ENCODE measurements at regions of chr11 and their contacts with region 1.

Region 1: DNA sequence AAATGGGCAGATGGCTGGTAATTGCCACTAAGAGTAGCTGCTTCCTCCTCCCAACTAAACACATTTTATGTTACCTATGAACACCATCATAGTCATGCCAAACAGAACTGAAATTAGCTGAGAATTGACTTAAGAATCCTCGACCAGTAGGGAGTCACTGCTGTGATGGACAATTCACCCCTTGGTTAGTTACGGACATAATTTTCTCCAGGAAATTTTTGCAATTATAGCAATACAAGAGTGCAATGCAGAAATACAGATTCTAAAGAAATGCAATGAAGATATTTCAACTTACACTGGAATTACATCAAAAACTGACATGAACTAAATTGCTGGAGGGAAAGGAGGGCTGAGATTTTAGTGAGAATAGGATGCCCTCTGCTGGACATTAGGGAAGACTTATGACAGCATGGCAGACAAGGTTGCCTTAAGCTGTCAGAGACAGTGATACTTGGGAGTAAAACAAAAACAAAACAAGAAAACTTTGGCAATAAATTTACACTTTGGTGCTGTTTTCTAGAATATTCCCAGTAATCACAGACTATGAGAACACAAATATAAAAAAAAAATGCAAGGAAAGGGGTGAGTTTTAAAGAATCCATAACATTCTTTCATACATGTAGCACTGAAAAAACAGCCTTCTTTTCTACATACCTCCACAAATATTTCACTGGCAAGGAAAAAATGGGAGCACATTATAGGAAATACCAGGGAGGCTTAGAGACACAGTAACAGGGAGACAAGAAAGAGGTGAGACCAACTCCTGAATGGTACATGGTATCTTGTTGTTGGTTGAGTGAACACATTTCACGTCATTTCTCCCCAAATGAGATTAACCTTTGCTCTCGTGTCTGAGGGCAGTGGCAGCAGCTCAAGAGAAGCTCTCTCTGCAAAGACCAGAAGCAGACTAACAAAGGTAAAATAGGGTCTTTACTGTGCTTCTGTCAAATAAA is 11.2 kb upstream of the PPP2R1B start:
- DNase-seq: peak in 1 of 2 donors; percentile 44
- ATAC-seq: peak; percentile 66 to 90 (median 84)
- H3K4me3 ChIP-seq: no peak overlapping the region
- H3K27ac ChIP-seq: peak overlapping the region in 2 of 10 donors; percentile 5 to 8
- H3K4me1 ChIP-seq: peaks cover 0 to 25% (median 7%) of the 10 kb centered on the region in 9 donors
- H3K27me3 ChIP-seq: no peaks in the 10 kb centered on the region
- CTCF ChIP-seq: peak; percentile 62 to 91 (median 82)

Region 2: DNA sequence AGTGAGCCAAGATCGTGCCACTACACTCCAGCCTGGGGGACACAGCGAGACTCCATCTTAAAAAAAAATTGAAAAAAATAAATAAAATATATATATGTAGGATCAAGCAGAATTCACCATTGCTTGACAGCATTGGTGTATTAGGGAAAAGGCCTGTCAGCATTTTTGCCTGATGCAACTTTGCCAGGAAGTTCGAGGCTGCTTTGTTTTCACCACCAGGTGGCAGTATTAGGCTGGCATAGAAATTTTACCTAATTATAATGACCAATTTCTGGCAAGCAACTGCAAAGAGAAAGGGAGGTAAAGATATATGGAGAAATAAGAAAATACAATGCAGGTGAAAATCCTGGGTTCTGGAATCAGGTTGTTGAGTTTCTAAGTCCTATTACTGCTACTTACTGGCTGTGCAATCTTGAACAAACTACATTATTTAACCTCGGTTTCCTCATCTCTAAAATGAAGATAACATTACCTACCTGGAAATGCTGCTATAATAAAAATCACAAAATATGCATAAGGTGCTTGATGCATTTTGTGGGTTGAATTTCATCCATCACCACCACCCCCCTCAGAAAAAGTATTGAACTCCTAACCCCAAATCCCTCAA is 212.2 kb before region 1 on chr11:
- intact Hi-C with region 1: loop called in 2 of 10 experiments (anchors 1 to 10 kb)
- DNase-seq: peak; percentile 18 to 79
- ATAC-seq: peak in 7 of 8 donors; percentile 30 to 54 (median 39)
- H3K4me3 ChIP-seq: no peak overlapping the region
- H3K27ac ChIP-seq: no peak overlapping the region
- H3K4me1 ChIP-seq: peaks cover 0 to 13% (median 0%) of the 10 kb centered on the region in 9 donors
- H3K27me3 ChIP-seq: no peaks in the 10 kb centered on the region
- CTCF ChIP-seq: peak; percentile 83 to 94 (median 93)

Region 3: GRCh38 chr11:111601979-111602864 is 175.1 kb before region 1 on chr11 and contains the start of gene SIK2:
- intact Hi-C with region 1: loop called (anchors 1 to 5 kb)
- DNase-seq: peak; percentile 94 to 95
- ATAC-seq: peak; percentile 94 to 97 (median 96)
- H3K4me3 ChIP-seq: peak within 1 kb of the TSS; percentile 58 to 98 (median 94)
- H3K27ac ChIP-seq: peak within 1 kb of the TSS; percentile 88 to 99 (median 98)
- H3K4me1 ChIP-seq: peaks cover 4 to 60% (median 43%) of the 10 kb centered on the region in 9 donors
- H3K27me3 ChIP-seq: no peaks in the 10 kb centered on the region
- CTCF ChIP-seq: peak; percentile 83 to 99 (median 94)
- total RNA-seq, gene SIK2: 17.3 to 41.6 (median 30.8) TPM

Region 4: GRCh38 chr11:111665777-111666176 is 111.6 kb before region 1 on chr11:
- intact Hi-C with region 1: no loop called
- DNase-seq: no peak
- ATAC-seq: peak in 4 of 8 donors; percentile 40 to 59 (median 52)
- H3K4me3 ChIP-seq: no peak overlapping the region
- H3K27ac ChIP-seq: no peak overlapping the region
- H3K4me1 ChIP-seq: peaks cover 8 to 26% (median 16%) of the 10 kb centered on the region in 9 donors
- H3K27me3 ChIP-seq: no peaks in the 10 kb centered on the region
- CTCF ChIP-seq: no peak

Region 5: GRCh38 chr11:111735262-111736116 is 41.9 kb before region 1 on chr11:
- intact Hi-C with region 1: loop called in 1 of 10 experiments (anchors 5 kb)
- DNase-seq: peak; percentile 73 to 88
- ATAC-seq: peak; percentile 68 to 85 (median 78)
- H3K4me3 ChIP-seq: peak overlapping the region in 9 of 10 donors; percentile 28 to 60 (median 51)
- H3K27ac ChIP-seq: peak overlapping the region; percentile 80 to 97 (median 94)
- H3K4me1 ChIP-seq: peaks cover 67 to 82% (median 79%) of the 10 kb centered on the region in 9 donors
- H3K27me3 ChIP-seq: no peaks in the 10 kb centered on the region
- CTCF ChIP-seq: peak in 1 of 9 donors; percentile 7

Region 6: DNA sequence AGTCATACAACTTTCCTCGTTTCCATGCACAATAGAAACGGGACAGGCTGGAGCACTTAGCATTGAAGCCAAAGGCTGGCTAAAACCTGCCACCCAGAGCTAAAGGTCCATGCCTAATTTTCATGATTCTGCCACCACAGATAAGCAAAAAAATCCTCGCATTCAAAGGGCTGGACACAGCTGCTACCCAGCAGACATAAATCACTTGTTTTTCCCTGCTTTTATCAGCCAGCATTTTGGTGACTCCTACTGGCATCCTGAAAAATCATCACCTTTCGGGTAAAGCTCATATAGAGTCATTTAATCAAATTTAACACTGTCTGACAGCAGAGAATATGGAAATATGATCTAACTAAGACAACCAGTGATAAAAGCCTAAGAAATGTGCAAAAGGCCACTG is 56.2 kb after region 1 on chr11:
- intact Hi-C with region 1: loop called in 2 of 10 experiments (anchors 5 kb)
- DNase-seq: no peak
- ATAC-seq: peak in 3 of 8 donors; percentile 33 to 58 (median 58)
- H3K4me3 ChIP-seq: no peak overlapping the region
- H3K27ac ChIP-seq: peak overlapping the region in 1 of 10 donors; percentile 22
- H3K4me1 ChIP-seq: peaks cover 0 to 13% (median 3%) of the 10 kb centered on the region in 9 donors
- H3K27me3 ChIP-seq: no peaks in the 10 kb centered on the region
- CTCF ChIP-seq: peak in 7 of 9 donors; percentile 12 to 48 (median 38)